Left cardiac atrium (tissue), 4 donors: ENCODE measurements at regions of chr10 and their contacts with region 1.

Region 1: DNA sequence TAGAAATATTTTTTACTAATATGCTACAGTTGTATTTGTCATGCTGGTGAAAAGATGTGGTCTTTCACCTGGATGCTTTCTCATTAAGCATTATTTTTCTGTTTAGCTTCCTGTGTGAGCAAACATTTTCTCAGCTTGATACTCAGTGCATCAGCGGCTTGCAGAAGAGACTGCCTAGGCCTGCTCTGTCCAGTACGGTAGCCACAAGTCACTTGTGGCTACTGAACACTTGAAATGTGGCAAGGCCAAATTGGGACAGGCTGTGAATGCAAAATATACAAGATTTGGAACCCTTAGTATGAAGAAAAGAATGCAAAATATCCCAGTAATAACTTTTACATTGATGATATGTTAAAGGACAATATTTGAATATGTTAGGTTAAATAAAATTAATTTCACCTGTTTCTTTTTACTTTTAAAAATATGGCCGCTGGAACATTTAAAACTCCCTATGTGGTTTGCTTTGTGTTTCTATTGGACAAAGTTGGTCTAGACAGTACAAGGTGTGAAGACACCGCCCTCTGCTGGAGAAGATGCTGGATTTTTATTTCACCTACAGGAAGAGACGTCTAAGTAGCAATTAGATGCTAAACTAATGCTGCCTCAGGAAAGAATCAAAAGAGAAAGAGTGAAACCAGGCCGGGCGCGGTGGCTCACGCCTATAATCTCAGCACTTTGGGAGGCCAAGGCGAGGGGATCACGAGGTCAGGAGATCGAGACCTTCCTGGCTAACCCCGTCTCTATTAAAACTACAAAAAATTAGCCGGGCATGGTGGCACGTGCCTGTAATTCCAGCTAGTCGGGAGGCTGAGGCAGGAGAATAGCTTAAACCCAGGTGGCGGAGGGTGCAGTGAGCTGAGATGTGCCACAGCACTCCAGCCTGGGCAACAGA is 5.3 kb downstream of the SRGN start:
- DNase-seq: peak; percentile 75
- ATAC-seq: peak; percentile 64 to 82

Region 2: GRCh38 chr10:69004821-69005220 is 88.4 kb before region 1 on chr10:
- intact Hi-C with region 1: loop called (anchors 5 to 10 kb)
- DNase-seq: no peak
- ATAC-seq: no peak

Region 3: DNA sequence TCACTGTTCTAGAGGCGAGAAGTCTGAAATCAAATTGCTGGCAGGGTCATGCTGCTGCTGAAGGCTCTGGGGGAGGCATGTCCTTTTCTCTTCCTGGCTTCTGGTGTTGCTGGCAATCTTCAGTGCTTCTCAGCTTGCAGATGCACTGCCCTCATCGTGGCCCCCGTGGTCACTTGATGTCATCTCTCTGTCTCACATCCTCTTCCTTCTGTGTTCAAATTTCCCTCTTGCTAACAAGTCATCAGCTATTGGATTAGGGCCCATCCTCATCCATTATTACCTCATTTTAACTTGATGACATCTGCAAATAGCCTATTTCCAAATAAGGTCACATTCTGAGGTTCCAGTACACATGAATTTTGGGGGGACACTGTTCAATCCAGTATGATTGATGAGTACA is 41.9 kb before region 1 on chr10:
- intact Hi-C with region 1: loop called in 1 of 2 experiments (anchors 5 kb)
- DNase-seq: no peak
- ATAC-seq: peak; percentile 39 to 48

Region 4: DNA sequence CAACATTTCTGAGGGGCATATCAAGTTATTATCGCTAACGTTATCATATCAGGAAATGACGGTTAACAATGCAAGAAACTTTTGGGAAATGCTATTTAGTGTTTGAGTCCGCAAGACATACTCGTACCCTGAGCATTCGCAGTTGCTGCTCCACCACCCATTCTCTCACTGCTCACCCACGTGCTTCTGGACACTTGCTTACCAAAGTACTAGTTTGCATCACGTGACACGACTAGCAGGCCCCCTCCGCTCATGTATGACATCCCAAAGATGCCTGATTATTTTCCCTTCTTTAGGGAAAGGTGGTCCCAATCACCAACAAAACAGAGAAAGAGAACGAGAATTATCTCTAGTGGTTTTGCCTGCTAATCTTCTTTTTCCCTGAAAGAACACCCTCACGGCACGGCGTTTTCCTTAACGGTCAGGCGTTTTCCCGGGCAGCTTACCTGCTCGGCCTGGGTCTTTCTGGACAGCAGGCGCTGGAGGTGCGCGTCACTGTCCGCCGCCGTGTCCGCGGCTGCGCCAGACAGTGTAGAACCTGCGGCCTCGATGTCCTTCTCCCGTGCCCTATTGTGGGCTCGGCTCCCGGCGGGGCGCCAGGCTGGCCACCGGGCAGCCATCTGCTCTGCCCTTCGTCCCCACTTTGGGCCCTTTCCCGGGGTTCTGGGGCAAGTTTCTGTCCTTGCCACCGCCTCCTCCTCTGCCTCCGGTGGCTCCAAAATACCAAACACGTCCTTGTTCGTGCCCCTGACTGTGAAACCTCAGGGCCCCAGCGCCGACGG is 86.7 kb after region 1 on chr10 and contains the start of gene SUPV3L1:
- intact Hi-C with region 1: no loop called
- DNase-seq: peak; percentile 95
- ATAC-seq: peak; percentile 97
- total RNA-seq, gene SUPV3L1: 29.1 to 32.4 TPM